OCI-LY7 (cell line): ENCODE measurements at regions of chr18 and their contacts with region 1.

Region 1: DNA sequence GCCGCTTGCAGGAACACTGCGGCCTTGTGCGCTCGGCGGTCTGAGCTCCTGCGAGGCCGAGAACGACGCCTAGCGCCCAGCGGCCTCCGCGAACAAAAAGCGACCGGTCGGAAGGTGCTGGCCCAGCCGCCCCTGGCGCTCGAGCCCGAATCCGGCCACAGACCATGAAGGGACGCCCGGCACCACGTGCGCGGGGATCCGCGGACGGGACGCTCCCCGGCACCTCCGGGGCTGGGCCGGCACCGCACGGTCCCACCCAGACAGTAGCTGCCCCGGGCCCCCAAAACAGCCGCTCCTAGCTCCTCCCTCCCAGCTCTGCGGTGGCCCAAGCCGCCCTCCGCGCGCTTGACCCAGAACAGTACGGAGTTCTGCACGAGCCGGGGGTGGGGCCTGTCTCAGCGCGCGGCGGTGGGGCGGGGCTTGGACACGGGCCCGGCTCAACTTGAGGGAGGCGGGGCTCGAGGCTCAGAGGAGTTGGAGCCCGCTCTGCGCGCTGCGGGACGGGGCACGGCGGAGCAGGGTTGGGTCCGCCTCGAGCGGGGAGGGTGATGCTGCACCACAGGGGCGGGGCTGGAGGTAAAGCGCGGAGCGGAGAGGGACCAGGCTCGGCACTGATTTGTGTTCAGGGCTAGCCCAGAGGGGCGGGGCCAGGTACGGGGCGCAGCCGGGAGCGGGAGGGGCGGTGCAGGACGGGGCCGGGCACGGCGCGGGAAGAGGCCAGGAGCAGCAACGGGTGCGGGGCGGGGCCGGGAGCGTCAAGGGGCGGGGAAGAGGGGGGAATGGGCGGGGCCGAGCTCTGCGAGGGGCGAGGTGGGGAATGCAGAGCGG is 538 bp upstream of the IMPA2 start:
- DNase-seq: peak; percentile 98
- H3K4me3 ChIP-seq: peak overlapping the region; percentile 91
- H3K27ac ChIP-seq: peak overlapping the region; percentile 70
- H3K4me1 ChIP-seq: peaks cover 15% of the 10 kb centered on the region
- CTCF ChIP-seq: no peak; the same call in 1 of the 2 replicates

Region 2: GRCh38 chr18:11851146-11851805 is 129.5 kb before region 1 on chr18 and contains the start of gene CHMP1B:
- CTCF ChIA-PET with region 1: no interaction called
- POLR2A ChIA-PET with region 1: interaction called, 8 read pairs
- intact Hi-C with region 1: loop called (anchors 1 kb)
- DNase-seq: peak; percentile 97
- H3K4me3 ChIP-seq: peak within 1 kb of the TSS; percentile 90
- H3K27ac ChIP-seq: peak within 1 kb of the TSS; percentile 35
- H3K4me1 ChIP-seq: peaks cover 25% of the 10 kb centered on the region
- CTCF ChIP-seq: no peak
- total RNA-seq, gene CHMP1B: 29.3 and 31.5 TPM in 2 replicates

Region 3: GRCh38 chr18:11908182-11909060 is 72.3 kb before region 1 on chr18 and contains the start of gene MPPE1:
- CTCF ChIA-PET with region 1: no interaction called
- POLR2A ChIA-PET with region 1: no interaction called
- intact Hi-C with region 1: loop called (anchors 1 kb)
- DNase-seq: peak; percentile 94
- H3K4me3 ChIP-seq: peak within 1 kb of the TSS; percentile 78
- H3K27ac ChIP-seq: peak within 1 kb of the TSS; percentile 80
- H3K4me1 ChIP-seq: peaks cover 16% of the 10 kb centered on the region
- CTCF ChIP-seq: no peak
- total RNA-seq, gene MPPE1: 26.5 and 32.5 TPM in 2 replicates

Region 4: GRCh38 chr18:11925800-11926481 is 54.8 kb before region 1 on chr18:
- CTCF ChIA-PET with region 1: no interaction called
- POLR2A ChIA-PET with region 1: no interaction called
- intact Hi-C with region 1: no loop called
- DNase-seq: no peak
- H3K4me3 ChIP-seq: no peak overlapping the region
- H3K27ac ChIP-seq: no peak overlapping the region
- H3K4me1 ChIP-seq: no peaks in the 10 kb centered on the region
- CTCF ChIP-seq: no peak

Region 5: DNA sequence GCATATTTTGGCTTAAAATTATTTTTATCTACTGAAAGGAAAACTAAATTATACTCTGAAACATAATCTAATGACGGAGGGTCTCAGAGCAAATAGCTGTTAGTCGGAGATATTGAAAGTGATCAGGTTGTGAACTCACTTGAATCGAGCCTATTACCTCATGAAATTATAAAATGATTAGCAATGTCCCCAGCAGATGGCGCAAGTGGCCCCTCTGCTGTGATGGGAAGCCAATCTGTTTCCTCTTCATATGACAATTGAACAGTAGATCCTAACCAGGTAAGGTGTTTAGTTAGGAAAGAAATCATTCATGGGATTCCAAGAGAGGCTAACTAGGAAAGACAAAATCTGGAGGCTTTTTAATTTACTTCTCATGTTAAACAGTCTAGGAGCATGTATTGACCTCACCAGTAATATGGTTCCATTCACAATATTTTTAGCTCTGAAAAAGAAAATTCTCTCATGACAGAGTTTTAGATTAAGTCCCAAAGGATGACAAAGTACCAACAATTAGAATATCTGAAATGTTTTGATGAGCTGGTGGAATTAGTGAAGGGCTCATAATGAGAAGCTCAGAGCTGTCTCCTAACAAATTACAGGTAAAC is 42.8 kb before region 1 on chr18:
- CTCF ChIA-PET with region 1: no interaction called
- POLR2A ChIA-PET with region 1: interaction called, 10 read pairs
- intact Hi-C with region 1: no loop called
- DNase-seq: peak; percentile 75
- H3K4me3 ChIP-seq: no peak overlapping the region
- H3K27ac ChIP-seq: no peak overlapping the region
- H3K4me1 ChIP-seq: no peaks in the 10 kb centered on the region
- CTCF ChIP-seq: peak; percentile 94

Region 6: GRCh38 chr18:11995445-11996189 is 14.8 kb after region 1 on chr18:
- CTCF ChIA-PET with region 1: interaction called, 12 read pairs
- POLR2A ChIA-PET with region 1: interaction called, 12 read pairs
- intact Hi-C with region 1: no loop called
- DNase-seq: peak; percentile 76
- H3K4me3 ChIP-seq: peak overlapping the region; percentile 20
- H3K27ac ChIP-seq: peak overlapping the region; percentile 25
- H3K4me1 ChIP-seq: peaks cover 28% of the 10 kb centered on the region
- CTCF ChIP-seq: peak; percentile 89